ENCODE measurements at regions of chr12 and their contacts with region 1.

Region 1: GRCh38 chr12:39671898-39672875 is 52.6 kb upstream of the ABCD2 start:
- DNase-seq: no peak
- ATAC-seq: no peak
- H3K4me3 Mint-ChIP-seq: no peak overlapping the region
- H3K27ac Mint-ChIP-seq: no peak overlapping the region
- H3K4me1 Mint-ChIP-seq: peaks cover 26% of the 10 kb centered on the region
- H3K27me3 Mint-ChIP-seq: no peaks in the 10 kb centered on the region

Region 2: GRCh38 chr12:39581592-39581991 is 90.6 kb before region 1 on chr12:
- CTCF ChIA-PET with region 1: no interaction called
- DNase-seq: no peak
- ATAC-seq: no peak
- H3K4me3 Mint-ChIP-seq: no peak overlapping the region
- H3K27ac Mint-ChIP-seq: no peak overlapping the region
- H3K4me1 Mint-ChIP-seq: peaks cover 2% of the 10 kb centered on the region
- H3K27me3 Mint-ChIP-seq: no peaks in the 10 kb centered on the region

Region 3: DNA sequence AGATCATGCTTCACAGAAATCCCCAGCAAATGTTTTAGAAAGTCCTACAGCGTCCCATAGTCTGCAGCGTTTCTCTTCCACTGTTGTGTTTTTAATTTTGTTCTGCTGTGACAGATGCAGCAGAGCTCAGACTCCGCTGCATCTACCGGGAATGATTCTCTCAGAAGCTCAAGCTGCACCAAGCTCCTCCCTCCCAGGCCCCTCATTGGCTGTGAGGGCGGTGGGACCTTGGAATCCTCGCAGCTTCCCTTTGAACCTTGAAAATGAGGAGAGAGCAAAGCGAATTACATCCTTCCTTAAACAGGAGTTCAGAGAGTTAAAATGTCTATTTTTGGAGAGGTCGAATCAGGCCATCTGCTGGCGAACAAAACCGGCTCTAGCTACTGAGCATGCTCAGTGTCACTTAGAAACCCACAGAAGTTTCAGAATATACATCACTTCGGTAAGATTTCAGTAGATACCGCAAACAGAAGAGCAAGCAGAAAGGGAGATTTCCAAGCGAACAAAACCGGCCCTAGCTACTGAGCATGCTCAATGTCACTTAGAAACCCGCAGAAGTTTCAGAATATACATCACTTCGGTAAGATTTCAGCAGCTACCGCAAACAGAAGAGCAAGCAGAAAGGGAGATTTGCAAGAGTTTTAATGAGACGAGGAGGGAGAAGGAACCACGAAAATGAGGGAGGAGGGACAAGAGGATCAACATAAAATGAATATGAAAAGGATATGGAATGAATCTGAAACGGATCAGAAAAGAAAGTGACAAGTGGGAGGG is 52.3 kb before region 1 on chr12 and contains the start of gene ABCD2:
- CTCF ChIA-PET with region 1: interaction called, 10 read pairs
- DNase-seq: peak; percentile 92
- ATAC-seq: peak; percentile 76
- H3K4me3 Mint-ChIP-seq: no peak within 1 kb of the TSS
- H3K27ac Mint-ChIP-seq: no peak within 1 kb of the TSS
- H3K4me1 Mint-ChIP-seq: peaks cover 30% of the 10 kb centered on the region
- H3K27me3 Mint-ChIP-seq: no peaks in the 10 kb centered on the region
- total RNA-seq, gene ABCD2: 25.0 to 26.6 TPM

Measured in activated CD8-positive, alpha-beta memory T cell treated with anti-CD3 and anti-CD28 coated beads, Interleukin-2, amount 10 ng/mL, durations not matched to agents 7 days and 5 days (primary cell).